ENCODE measurements at regions of chr6 and their contacts with region 1.

Region 1: DNA sequence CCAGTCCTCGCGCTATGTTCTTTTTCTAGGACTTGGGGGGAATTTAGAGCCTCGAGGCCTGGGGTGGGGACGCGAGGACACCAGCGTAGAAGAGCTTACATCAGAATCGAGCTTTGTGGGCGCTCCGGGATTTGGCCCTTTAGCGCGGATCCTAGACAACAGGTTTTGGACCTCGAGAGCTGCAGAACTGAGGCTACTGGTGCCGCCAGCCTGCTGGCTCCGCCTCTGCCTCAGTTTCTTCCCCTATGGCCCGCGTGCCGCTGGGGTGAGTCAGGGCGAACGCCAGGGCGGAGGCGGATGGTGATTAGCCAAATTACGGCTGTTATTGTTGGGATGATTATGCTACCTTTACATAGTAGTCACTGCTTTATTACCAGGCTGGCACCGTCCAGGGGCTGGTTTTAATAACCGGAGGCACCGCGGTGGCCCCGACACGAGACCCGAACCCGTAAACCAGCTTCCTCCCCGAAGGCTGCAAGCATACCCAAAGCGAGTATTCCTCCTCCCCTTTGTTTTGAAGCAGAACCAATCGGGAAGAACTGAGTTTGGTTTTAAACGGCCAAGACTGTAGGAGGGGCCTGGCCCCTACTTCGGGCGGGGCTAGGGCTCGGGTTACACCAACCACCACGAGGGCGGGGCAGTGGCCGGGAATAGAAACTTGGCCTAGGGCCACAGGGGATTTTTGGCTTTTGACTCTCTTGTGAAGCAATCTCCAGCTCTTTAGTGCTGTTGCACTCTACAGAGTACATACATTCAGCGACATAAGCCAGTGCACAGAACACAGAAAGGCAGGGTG is 639 bp upstream of the GTPBP2 start:
- DNase-seq: peak; percentile 94
- H3K4me3 Mint-ChIP-seq: peak overlapping the region; percentile 99
- H3K27ac Mint-ChIP-seq: peak overlapping the region; percentile 95
- H3K4me1 Mint-ChIP-seq: peaks cover 44% of the 10 kb centered on the region
- H3K27me3 Mint-ChIP-seq: no peaks in the 10 kb centered on the region

Region 2: DNA sequence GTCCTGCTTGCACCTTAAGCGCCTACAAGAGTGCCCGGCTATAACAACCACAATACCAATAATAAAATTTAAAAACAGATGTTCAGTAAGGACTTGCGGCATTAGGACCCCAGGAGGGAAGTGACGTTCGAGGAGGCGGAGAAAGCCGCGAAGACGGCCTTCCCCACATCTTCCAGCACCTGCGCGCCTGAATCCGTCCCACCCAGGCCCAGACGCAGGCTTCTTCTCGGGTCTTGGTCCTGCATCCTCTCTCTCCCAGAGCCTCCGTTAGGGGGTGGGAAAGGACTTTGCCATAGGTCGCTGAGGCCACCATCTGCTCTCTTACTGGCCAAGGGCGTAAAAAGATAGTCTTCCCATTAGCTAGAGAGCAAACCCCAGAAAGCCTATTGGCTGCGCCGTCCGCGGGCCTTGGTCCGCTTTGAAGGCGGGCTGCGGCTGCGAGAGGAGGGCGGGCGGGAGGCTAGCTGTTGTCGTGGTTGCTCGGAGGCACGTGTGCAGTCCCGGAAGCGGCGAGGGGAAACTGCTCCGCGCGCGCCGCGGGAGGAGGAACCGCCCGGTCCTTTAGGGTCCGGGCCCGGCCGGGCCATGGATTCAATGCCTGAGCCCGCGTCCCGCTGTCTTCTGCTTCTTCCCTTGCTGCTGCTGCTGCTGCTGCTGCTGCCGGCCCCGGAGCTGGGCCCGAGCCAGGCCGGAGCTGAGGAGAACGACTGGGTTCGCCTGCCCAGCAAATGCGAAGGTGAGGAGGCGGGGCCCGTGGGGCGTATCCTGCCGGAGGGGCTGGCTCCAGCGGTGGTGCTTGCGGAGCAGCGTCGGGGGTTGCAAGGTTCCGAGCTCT is 700.5 kb before region 1 on chr6 and contains the start of gene CNPY3:
- intact Hi-C with region 1: loop called (anchors 1 kb)
- DNase-seq: peak; percentile 93
- H3K4me3 Mint-ChIP-seq: peak within 1 kb of the TSS; percentile 99
- H3K27ac Mint-ChIP-seq: peak within 1 kb of the TSS; percentile 98
- H3K4me1 Mint-ChIP-seq: peaks cover 38% of the 10 kb centered on the region
- H3K27me3 Mint-ChIP-seq: no peaks in the 10 kb centered on the region
- total RNA-seq, gene CNPY3: 47.2 and 49.2 TPM in 2 replicates

Region 3: DNA sequence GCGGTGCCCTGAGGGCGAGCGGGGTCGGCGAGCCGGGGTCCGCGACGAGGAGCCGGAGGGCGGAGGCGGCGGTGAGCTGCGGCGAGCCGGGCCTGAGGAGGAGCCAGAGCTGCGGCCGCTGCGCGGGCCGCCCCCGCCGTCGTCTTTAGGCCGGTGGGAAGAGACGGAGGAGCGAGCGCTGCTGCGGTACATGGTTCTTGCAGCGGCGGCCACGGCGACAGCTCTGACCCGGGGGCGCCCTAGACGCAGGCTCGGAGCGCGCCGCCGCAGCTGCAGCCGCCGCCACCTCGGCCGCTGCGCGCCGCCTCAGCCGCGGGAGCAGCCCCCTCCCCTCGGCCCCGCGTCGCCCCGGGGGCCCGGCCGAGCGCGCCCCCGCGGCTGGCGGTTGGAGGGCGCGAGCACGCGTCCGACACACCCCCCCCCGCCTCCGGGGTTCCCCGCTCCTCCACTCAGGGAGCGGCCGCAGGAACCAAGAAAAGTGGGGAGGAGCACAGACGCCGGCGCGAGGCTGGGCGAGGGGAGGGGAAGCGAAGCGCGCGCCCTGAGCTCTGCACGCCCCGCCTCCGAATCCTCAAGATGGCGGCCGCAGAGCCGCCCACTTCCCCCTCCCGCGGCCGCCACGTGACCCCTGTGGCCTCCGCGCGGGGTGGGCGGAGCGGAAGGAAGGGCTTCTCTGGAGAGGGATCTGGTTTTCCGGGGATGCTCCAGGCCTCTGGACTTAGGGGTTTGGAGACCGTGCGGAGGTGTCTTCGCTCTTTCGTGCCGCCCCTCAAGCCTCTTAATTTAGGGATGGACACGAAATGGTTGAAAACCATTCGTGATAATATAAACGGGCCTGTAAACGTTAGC is 260.3 kb before region 1 on chr6 and contains the start of gene ZNF318:
- intact Hi-C with region 1: loop called (anchors 1 kb)
- DNase-seq: peak; percentile 93
- H3K4me3 Mint-ChIP-seq: peak within 1 kb of the TSS; percentile 86
- H3K27ac Mint-ChIP-seq: peak within 1 kb of the TSS; percentile 91
- H3K4me1 Mint-ChIP-seq: peaks cover 36% of the 10 kb centered on the region
- H3K27me3 Mint-ChIP-seq: peaks cover 2% of the 10 kb centered on the region
- total RNA-seq, gene ZNF318: 9.1 and 9.7 TPM in 2 replicates

Region 4: GRCh38 chr6:43516697-43517504 is 112.8 kb before region 1 on chr6 and contains the starts of genes POLR1C and YIPF3:
- intact Hi-C with region 1: loop called (anchors 1 kb)
- DNase-seq: peak; percentile 95
- H3K4me3 Mint-ChIP-seq: no peak within 1 kb of the TSS
- H3K27ac Mint-ChIP-seq: no peak within 1 kb of the TSS
- H3K4me1 Mint-ChIP-seq: peaks cover 20% of the 10 kb centered on the region
- H3K27me3 Mint-ChIP-seq: no peaks in the 10 kb centered on the region
- total RNA-seq, gene POLR1C: 85.8 and 98.0 TPM in 2 replicates
- total RNA-seq, gene YIPF3: 60.2 and 62.5 TPM in 2 replicates

Region 5: DNA sequence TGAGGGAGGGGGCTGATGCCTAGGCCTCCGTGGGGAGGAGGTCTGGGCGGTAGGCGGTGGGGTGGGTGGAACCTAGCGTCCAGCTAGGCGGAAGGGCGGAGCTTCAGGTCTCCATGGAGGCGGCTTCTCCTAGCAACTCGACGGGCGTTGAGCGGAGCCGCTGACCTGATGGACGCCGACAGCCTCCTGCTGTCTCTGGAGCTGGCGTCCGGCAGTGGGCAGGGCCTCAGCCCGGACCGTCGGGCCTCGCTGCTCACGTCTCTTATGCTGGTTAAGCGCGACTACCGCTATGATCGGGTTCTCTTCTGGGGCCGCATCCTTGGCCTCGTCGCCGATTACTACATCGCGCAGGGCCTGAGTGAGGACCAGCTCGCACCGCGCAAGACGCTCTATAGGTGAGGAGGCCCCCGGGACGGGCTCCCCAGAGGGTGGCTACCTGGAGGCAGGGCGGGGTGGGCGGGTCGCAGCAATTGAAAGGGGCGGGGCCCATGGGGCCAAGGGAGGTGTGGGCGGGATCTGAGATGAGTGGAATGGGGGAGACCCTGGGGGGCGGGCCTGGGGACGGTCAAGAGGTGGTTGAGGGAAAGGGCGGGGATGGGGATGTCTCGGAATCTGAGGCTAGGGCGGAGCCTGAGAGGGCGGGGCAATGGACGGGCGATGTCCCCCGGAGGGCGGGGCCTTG is 15.4 kb after region 1 on chr6 and contains the start of gene RSPH9:
- intact Hi-C with region 1: loop called (anchors 1 kb)
- DNase-seq: peak; percentile 63
- H3K4me3 Mint-ChIP-seq: peak within 1 kb of the TSS; percentile 87
- H3K27ac Mint-ChIP-seq: peak within 1 kb of the TSS; percentile 72
- H3K4me1 Mint-ChIP-seq: peaks cover 25% of the 10 kb centered on the region
- H3K27me3 Mint-ChIP-seq: peaks cover 3% of the 10 kb centered on the region
- total RNA-seq, gene RSPH9: not detected in 2 replicates

Region 6: DNA sequence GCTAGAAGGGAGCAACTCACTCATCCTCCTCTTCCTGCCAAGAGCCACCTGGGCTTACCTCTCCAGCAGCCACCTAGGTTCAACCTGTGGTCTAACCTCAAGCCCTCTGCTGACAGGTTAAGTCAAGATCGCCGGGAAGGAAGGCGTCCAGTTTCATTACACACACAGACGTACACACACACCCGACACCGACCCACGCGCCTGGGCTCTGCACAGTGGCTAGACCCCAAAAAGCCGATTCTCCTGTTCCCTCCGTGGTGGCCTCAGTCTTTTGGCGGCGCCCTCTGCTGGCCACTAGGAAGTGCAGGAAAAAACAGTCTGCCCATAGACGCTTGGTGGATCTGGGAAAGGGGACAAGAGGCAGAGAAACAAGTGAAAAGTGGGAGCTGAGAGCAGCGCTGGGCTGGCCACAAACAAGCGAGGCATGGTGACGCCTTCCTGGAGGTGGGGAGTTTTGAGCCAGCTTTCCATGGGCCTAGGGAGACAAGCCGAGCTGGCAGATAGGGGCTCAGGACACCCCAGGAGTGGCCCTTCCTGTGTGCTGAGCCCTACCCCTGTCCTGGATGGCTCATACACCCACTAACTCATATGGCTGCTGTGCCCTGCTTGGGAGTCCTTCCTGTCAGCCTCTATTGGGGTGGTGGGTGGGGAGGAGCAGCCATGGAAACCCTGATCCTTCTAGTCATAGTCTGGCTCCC is 444.9 kb after region 1 on chr6:
- intact Hi-C with region 1: loop called (anchors 1 kb)
- DNase-seq: peak; percentile 51
- H3K4me3 Mint-ChIP-seq: peak overlapping the region; percentile 77
- H3K27ac Mint-ChIP-seq: peak overlapping the region; percentile 30
- H3K4me1 Mint-ChIP-seq: peaks cover 38% of the 10 kb centered on the region
- H3K27me3 Mint-ChIP-seq: peaks cover 17% of the 10 kb centered on the region

Region 7: DNA sequence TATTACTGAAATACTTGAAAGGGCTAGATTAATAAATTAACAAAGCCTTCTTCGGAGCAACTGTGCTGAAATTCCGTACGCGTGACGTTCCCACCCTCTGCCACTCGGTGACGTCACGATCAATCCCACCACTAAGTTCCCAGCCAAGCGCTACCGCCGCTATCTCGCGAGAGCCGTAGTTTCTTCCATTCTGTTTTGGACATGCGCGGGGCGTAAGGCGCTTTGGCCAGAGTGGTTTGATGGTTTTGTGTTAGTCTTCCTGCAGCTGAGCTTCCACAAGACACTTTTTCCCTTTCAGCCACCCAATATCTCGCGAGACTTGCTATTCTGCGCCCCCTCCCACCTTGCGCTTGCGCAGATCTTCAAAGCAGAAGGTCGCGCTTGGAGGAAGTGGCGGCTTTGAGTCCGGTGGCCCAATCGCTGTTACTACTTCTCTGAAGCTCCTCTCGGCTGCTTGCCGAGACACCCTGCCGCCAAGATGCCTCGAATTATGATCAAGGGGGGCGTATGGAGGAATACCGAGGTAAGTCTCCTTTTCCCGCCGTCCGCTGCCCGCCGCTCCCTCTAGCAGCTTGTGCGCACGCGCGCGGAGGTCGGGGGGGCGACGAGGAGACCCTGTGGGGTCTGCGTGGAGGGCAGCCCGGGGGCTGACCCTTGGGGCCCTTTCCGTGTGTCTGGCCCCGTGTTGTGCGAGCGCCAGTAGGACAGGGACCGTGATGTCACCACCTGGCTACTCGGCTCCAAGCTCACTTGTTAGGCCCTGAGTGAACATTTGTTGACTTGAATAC is 757.8 kb after region 1 on chr6 and contains the start of gene CDC5L:
- intact Hi-C with region 1: loop called (anchors 5 kb)
- DNase-seq: peak; percentile 93
- H3K4me3 Mint-ChIP-seq: peak within 1 kb of the TSS; percentile 97
- H3K27ac Mint-ChIP-seq: peak within 1 kb of the TSS; percentile 99
- H3K4me1 Mint-ChIP-seq: peaks cover 40% of the 10 kb centered on the region
- H3K27me3 Mint-ChIP-seq: peaks cover 3% of the 10 kb centered on the region
- total RNA-seq, gene CDC5L: 28.1 and 28.4 TPM in 2 replicates

Measured in activated T-helper 1 cell treated with anti-CD3 and anti-CD28 coated beads, Interleukin-12 subunit alpha, Interleukin-12 subunit beta, Interleukin-2, Interleukin-4 antibody, amounts not matched to agents 30 ng/mL and 10 ng/mL and 1 ng/mL, durations not matched to agents 14 hours and 24 hours and 36 hours (primary cell).